PC-3 (cell line): ENCODE measurements at regions of chr7 and their contacts with region 1.

Region 1: GRCh38 chr7:120950539-120951308 is at the start of gene ING3:
- DNase-seq: peak; percentile 97
- ATAC-seq: peak; percentile 90
- H3K4me3 ChIP-seq: peak within 1 kb of the TSS; percentile 93
- H3K27ac ChIP-seq: peak within 1 kb of the TSS; percentile 92
- H3K4me1 ChIP-seq: peaks cover 10% of the 10 kb centered on the region; the same call in 1 of the 2 replicates
- H3K27me3 ChIP-seq: no peaks in the 10 kb centered on the region
- CTCF ChIP-seq: no peak
- total RNA-seq, gene ING3: 12.4 and 12.8 TPM in 2 replicates

Region 2: GRCh38 chr7:120740348-120740747 is 210.4 kb before region 1 on chr7:
- CTCF ChIA-PET with region 1: no interaction called
- POLR2A ChIA-PET with region 1: no interaction called
- intact Hi-C with region 1: loop called (anchors 5 kb)
- DNase-seq: no peak
- ATAC-seq: no peak
- H3K4me3 ChIP-seq: no peak overlapping the region
- H3K27ac ChIP-seq: no peak overlapping the region
- H3K4me1 ChIP-seq: peaks cover 18% of the 10 kb centered on the region
- H3K27me3 ChIP-seq: no peaks in the 10 kb centered on the region
- CTCF ChIP-seq: no peak

Region 3: GRCh38 chr7:120961638-120962173 is 11.0 kb after region 1 on chr7:
- CTCF ChIA-PET with region 1: no interaction called
- POLR2A ChIA-PET with region 1: interaction called, 15 read pairs
- intact Hi-C with region 1: no loop called
- DNase-seq: no peak
- ATAC-seq: no peak
- H3K4me3 ChIP-seq: no peak overlapping the region
- H3K27ac ChIP-seq: no peak overlapping the region
- H3K4me1 ChIP-seq: no peaks in the 10 kb centered on the region
- H3K27me3 ChIP-seq: no peaks in the 10 kb centered on the region
- CTCF ChIP-seq: no peak

Region 4: GRCh38 chr7:121041516-121042148 is 90.9 kb after region 1 on chr7:
- CTCF ChIA-PET with region 1: no interaction called
- POLR2A ChIA-PET with region 1: no interaction called
- intact Hi-C with region 1: no loop called
- DNase-seq: peak; percentile 49
- ATAC-seq: peak; percentile 81
- H3K4me3 ChIP-seq: no peak overlapping the region
- H3K27ac ChIP-seq: peak overlapping the region; percentile 30; the same call in 1 of the 2 replicates
- H3K4me1 ChIP-seq: peaks cover 9% of the 10 kb centered on the region
- H3K27me3 ChIP-seq: no peaks in the 10 kb centered on the region
- CTCF ChIP-seq: no peak